ENCODE measurements at regions of chr4 and their contacts with region 1.

Region 1: GRCh38 chr4:95013236-95013635 is 255.5 kb downstream of the BMPR1B start:
- DNase-seq: no peak
- H3K4me3 ChIP-seq: no peak overlapping the region
- H3K4me3 Mint-ChIP-seq: no peak overlapping the region
- H3K27ac Mint-ChIP-seq: no peak overlapping the region
- H3K4me1 ChIP-seq: peaks cover 10% of the 10 kb centered on the region
- H3K4me1 Mint-ChIP-seq: peaks cover 12% of the 10 kb centered on the region
- H3K27me3 ChIP-seq: no peaks in the 10 kb centered on the region
- H3K27me3 Mint-ChIP-seq: no peaks in the 10 kb centered on the region
- CTCF ChIP-seq: no peak

Region 2: DNA sequence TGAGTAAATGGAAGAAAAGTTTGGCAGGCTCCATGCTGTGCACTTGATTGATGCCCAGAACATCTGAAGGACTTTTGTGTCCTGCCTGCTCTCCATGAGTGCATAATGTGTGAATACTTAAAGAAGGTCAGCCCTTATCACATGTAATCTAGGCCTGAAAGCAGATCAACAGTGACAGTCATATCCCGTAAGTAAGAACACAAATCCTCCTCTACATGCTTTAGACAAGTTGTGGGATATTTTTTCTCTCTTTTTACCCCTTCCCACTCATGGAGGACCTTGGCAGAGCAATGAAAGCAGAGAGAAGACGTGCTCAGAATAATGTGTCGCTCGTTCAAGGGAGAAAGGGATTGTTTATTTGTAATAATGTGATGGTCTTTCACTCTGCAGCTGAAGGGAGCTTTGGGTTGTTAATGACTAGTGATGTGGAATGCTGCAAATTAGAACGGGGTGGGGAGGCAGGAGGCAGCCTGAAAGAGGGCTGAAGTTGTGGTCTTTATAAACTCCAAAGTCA is 31.1 kb after region 1 on chr4:
- CTCF ChIA-PET with region 1: no interaction called
- POLR2A ChIA-PET with region 1: no interaction called
- intact Hi-C with region 1: loop called (anchors 2 kb)
- DNase-seq: no peak
- H3K4me3 ChIP-seq: no peak overlapping the region
- H3K4me3 Mint-ChIP-seq: no peak overlapping the region
- H3K27ac Mint-ChIP-seq: no peak overlapping the region
- H3K4me1 ChIP-seq: peaks cover 8% of the 10 kb centered on the region
- H3K4me1 Mint-ChIP-seq: peaks cover 2% of the 10 kb centered on the region
- H3K27me3 ChIP-seq: no peaks in the 10 kb centered on the region
- H3K27me3 Mint-ChIP-seq: no peaks in the 10 kb centered on the region
- CTCF ChIP-seq: no peak